ENCODE measurements at regions of chr1 and their contacts with region 1.

Region 1: DNA sequence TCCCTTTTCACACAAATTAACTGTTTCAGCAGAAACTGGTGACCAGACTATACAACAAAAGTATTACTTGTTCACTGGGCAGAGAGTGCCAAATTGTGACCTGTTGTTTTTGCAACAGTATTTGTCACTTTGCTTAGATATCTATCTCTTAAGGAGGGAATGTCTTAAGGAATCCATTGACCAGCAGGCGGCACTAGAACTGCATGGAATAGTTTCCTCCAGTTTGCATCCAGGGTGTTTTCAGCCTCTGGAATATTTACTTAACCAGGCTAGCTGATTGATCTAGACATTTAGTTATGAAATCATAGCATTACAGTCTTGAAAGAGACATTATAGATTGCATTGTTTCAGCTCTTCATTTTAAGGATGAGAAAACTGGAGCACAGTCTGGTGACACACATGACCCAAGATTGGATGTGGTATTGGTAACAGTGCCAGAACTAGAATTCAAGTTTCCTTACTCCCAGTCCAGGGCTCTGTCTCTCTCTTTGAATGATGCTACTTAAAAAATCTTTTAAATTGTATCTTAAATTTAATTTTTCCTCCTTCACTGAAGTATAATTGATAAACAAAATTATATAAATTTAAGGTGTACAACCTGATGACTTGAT is 16.9 kb downstream of the RPTN start:
- DNase-seq: no peak
- H3K4me3 ChIP-seq: no peak overlapping the region
- H3K27me3 ChIP-seq: peaks cover 5% of the 10 kb centered on the region; the same call in 1 of the 2 replicates
- CTCF ChIP-seq: peak; percentile 86

Region 2: DNA sequence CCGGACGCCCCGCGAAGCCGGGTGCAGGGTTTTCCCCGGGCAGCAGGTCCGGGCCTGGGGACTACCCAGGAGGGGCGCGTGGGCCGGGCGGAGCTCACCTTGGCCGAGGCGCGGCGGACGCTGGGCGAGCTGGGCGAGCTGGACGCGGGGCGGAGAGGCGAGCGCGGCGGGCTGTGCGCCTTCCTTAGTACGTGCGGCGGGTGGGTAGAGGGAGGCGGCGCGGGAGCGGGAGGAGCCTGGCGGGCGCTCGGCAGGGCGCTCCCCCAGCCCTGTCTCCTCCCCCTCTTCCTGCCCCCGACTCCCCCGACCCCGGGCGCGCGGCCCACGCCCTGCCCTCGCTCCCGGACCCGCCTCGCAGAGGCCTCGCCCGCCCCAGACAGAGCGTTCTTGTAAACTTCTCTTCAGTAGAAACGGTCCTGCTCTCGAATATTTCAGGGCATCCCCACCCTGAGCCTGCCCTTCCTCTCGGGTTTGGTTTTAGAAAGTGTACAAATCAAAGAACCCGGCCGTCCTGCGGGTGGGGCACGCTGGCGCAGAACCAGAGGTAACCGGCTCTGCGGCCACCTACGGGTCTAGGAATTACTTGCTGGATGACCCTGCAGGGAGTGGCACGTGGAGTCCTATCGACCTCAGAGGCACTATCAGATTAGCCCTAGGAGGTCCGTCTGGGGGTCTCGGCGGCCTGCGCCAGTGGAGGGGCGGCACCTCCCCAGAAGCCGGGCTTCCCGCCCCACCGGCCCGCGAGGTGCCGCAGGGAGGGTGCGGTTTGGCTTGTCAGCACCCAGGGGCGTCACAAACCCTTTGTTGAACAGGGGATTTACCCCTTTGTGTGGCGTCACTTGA is 148.2 kb before region 1 on chr1 and contains the start of gene S100A10:
- CTCF ChIA-PET with region 1: no interaction called
- POLR2A ChIA-PET with region 1: no interaction called
- DNase-seq: no peak
- H3K4me3 ChIP-seq: peak within 1 kb of the TSS; percentile 89
- H3K27me3 ChIP-seq: no peaks in the 10 kb centered on the region
- CTCF ChIP-seq: no peak
- polyA plus RNA-seq, gene S100A10: 40.3 and 88.4 TPM in 2 replicates

Region 3: DNA sequence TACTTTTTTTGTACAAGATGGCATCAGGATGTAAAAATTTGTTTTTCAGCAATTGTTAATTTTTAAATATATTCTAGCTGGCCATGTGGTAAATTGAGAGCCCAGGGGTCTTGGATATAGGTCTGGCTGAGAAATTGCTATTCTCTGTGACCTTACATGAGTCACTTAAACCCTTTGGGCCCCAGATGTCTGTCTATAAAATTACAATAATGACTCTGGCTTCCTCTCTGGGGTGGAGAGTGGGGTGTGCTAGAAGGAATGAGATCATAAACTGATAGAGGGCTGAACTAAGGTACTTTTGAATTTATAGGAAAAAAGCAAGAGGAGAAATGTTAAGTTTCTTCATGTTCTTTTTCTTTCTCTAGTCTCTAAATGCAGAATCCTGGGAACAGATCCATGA is 14.4 kb before region 1 on chr1:
- CTCF ChIA-PET with region 1: interaction called, 12 read pairs
- POLR2A ChIA-PET with region 1: no interaction called
- DNase-seq: no peak
- H3K4me3 ChIP-seq: no peak overlapping the region
- H3K27me3 ChIP-seq: peaks cover 8% of the 10 kb centered on the region
- CTCF ChIP-seq: no peak

Region 4: DNA sequence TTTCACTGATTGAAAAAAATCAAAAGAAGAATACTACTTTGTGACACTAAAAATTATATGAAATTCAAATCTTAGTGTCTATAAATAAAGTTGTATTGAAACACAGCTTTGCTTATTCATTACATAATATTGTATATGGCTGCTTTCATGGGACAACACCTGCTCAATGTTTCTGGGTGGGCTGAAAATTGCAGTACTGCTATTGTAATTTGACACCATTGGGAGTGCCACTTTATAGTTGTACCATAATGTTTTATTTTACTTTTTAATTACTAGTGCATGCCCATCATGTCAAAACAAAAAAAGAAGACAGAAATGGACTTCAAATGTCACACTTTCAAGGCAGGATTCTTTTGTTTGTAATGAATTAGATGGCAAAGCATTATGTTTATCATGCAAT is 33.5 kb after region 1 on chr1:
- CTCF ChIA-PET with region 1: interaction called, 276 read pairs
- POLR2A ChIA-PET with region 1: no interaction called
- DNase-seq: no peak
- H3K4me3 ChIP-seq: no peak overlapping the region
- H3K27me3 ChIP-seq: peaks cover 3% of the 10 kb centered on the region; the same call in 1 of the 2 replicates
- CTCF ChIP-seq: no peak

Region 5: GRCh38 chr1:152313319-152313801 is 171.3 kb after region 1 on chr1:
- CTCF ChIA-PET with region 1: no interaction called
- POLR2A ChIA-PET with region 1: no interaction called
- DNase-seq: no peak
- H3K4me3 ChIP-seq: no peak overlapping the region
- H3K27me3 ChIP-seq: no peaks in the 10 kb centered on the region
- CTCF ChIP-seq: no peak